Activated naive CD4-positive, alpha-beta T cell treated with anti-CD3 and anti-CD28 coated beads for 36 hours (primary cell): ENCODE measurements at regions of chr17 and their contacts with region 1.

Region 1: DNA sequence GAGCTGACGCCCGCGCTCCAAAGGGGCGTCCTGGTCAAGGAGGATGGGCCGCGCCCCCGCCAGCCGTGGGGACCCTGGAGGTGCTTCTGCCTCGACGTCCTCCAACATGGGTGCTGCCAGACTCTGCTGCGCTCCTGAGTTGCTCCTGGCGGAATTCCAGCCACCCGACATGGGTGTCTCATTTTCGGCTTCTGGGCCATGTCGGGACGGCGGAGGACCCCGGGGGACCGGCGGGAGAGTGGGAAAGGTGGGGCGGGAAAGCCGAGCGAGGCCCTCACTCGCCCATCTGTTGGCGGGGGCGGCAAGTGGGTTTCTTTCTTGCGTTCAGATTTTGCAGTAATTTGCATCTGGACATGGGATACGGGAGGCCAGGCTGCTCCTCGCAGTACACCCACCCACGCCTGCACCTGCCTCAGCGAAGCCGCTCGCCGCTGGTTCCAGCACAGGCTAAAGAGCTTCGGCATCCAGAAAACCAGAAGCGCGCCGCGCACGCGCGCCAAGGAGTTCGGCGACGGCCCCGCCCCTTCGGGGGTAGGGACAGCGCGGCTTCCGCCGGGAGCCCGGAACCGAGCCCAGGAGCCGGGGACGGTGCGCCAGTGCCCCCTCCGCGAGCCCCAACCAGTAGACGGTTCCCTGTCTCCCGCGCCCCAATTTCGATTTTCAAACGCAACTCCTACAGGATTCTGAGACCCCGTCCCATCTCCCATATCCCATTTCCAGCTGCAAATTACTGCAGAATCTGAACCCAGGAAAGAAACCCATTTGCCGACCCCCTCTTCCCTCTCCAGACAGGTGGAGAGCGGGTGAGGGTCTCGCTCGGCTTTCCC is at the start of gene ARMC7:
- DNase-seq: peak; percentile 93
- H3K4me3 Mint-ChIP-seq: peak within 1 kb of the TSS; percentile 90
- H3K27ac Mint-ChIP-seq: peak within 1 kb of the TSS; percentile 91
- H3K4me1 Mint-ChIP-seq: peaks cover 29% of the 10 kb centered on the region
- H3K27me3 Mint-ChIP-seq: no peaks in the 10 kb centered on the region
- total RNA-seq, gene ARMC7: 3.8 to 4.9 TPM

Region 2: DNA sequence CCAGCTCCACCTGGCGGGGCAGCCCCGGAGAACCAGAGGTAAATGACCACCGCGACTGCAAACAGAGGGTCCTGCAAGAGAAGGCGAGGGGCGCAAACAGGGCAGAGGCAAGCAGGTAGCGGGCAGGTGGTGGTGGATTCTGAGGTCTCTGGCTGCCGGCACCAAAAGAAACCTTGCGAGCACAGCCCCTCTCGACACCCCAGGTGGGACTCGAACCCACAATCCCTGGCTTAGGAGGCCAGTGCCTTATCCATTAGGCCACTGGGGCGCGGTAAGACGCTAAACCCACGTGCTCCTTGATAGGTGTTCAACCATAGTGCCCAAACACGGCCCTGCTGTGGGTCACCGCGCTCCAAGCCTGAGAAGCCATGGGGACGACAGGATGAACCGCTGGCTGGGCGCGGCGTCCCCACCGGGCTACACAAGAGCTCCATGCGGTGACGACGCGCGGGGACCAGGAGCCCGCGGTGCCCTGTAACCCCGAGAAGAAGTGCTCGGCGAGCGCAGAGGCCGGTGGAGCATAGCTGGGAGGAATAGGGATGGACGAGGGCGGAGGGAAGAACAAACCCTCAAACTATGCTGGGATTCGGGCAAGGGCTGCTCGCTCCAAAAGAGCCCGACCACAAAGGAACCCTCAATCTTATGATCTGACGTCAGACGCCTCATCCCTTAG is 75.2 kb before region 1 on chr17:
- CTCF ChIA-PET with region 1: interaction called, 7 read pairs
- intact Hi-C with region 1: loop called (anchors 5 kb)
- DNase-seq: peak; percentile 96
- H3K4me3 Mint-ChIP-seq: peak overlapping the region; percentile 95
- H3K27ac Mint-ChIP-seq: peak overlapping the region; percentile 93
- H3K4me1 Mint-ChIP-seq: peaks cover 46% of the 10 kb centered on the region
- H3K27me3 Mint-ChIP-seq: peaks cover 3% of the 10 kb centered on the region

Region 3: GRCh38 chr17:75087558-75088453 is 21.8 kb before region 1 on chr17 and contains the start of gene SLC16A5:
- CTCF ChIA-PET with region 1: interaction called, 8 read pairs
- intact Hi-C with region 1: loop called (anchors 2 kb)
- DNase-seq: peak; percentile 58
- H3K4me3 Mint-ChIP-seq: peak within 1 kb of the TSS; percentile 70
- H3K27ac Mint-ChIP-seq: peak within 1 kb of the TSS; percentile 56
- H3K4me1 Mint-ChIP-seq: peaks cover 44% of the 10 kb centered on the region
- H3K27me3 Mint-ChIP-seq: no peaks in the 10 kb centered on the region
- total RNA-seq, gene SLC16A5: 2.5 to 3.1 TPM

Region 4: GRCh38 chr17:75154195-75155106 is 44.8 kb after region 1 on chr17 and contains the start of gene JPT1:
- CTCF ChIA-PET with region 1: interaction called, 13 read pairs
- intact Hi-C with region 1: loop called (anchors 1 kb)
- DNase-seq: peak; percentile 100
- H3K4me3 Mint-ChIP-seq: peak within 1 kb of the TSS; percentile 94
- H3K27ac Mint-ChIP-seq: peak within 1 kb of the TSS; percentile 78
- H3K4me1 Mint-ChIP-seq: peaks cover 30% of the 10 kb centered on the region
- H3K27me3 Mint-ChIP-seq: no peaks in the 10 kb centered on the region
- total RNA-seq, gene JPT1: 242 to 258 TPM

Region 5: GRCh38 chr17:75205037-75205792 is 95.6 kb after region 1 on chr17 and contains the start of gene NUP85:
- CTCF ChIA-PET with region 1: interaction called, 179 read pairs
- intact Hi-C with region 1: loop called (anchors 1 kb)
- DNase-seq: peak; percentile 94
- H3K4me3 Mint-ChIP-seq: peak within 1 kb of the TSS; percentile 98
- H3K27ac Mint-ChIP-seq: peak within 1 kb of the TSS; percentile 98
- H3K4me1 Mint-ChIP-seq: peaks cover 24% of the 10 kb centered on the region
- H3K27me3 Mint-ChIP-seq: no peaks in the 10 kb centered on the region
- total RNA-seq, gene NUP85: 112 to 116 TPM